Prostate gland (tissue), 2 donors: ENCODE measurements at regions of chr11 and their contacts with region 1.

Region 1: GRCh38 chr11:125874556-125875124 is 12.8 kb upstream of the HYLS1 start:
- DNase-seq: peak; percentile 36
- H3K4me3 ChIP-seq: no peak overlapping the region
- H3K27ac ChIP-seq: no peak overlapping the region
- H3K4me1 ChIP-seq: no peaks in the 10 kb centered on the region
- H3K27me3 ChIP-seq: no peaks in the 10 kb centered on the region
- CTCF ChIP-seq: peak in 3 of 4 experiments; percentile 47 to 59 (median 59)
- POLR2A ChIP-seq: no peak

Region 2: GRCh38 chr11:125625630-125626287 is 248.9 kb before region 1 on chr11:
- intact Hi-C with region 1: loop called (anchors 2 kb)
- DNase-seq: peak; percentile 82
- H3K4me3 ChIP-seq: peak overlapping the region; percentile 63 to 66
- H3K27ac ChIP-seq: peak overlapping the region; percentile 94
- H3K4me1 ChIP-seq: no peaks in the 10 kb centered on the region
- H3K27me3 ChIP-seq: no peaks in the 10 kb centered on the region
- CTCF ChIP-seq: peak in 1 of 4 experiments; percentile 15
- POLR2A ChIP-seq: peak; percentile 76